Transverse colon (tissue), 4 donors: ENCODE measurements at regions of chr18 and their contacts with region 1.

Region 1: DNA sequence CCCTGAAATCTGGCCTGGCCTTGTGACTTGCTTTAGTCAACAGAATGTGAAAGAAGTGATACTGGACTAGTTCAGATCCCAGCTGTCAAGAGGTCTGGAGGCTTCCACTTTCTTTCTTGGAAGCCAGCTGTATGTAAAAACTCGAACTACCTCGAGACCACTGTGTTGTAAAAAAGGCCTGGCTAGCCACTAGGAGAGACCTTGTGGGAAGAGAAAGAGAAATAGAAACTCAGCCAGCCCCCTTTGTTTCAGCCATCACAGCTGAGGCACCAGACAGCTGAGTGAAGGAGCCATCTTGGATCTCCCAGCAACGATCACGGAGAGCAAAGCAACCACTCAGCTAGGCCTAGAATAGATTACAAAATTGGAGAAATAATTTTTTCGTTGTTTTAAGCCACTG is 324.9 kb upstream of the TCF4 start:
- DNase-seq: no peak
- H3K4me3 ChIP-seq: no peak overlapping the region
- H3K27ac ChIP-seq: no peak overlapping the region
- H3K4me1 ChIP-seq: peaks cover 0 to 4% (median 2%) of the 10 kb centered on the region in 4 donors
- H3K27me3 ChIP-seq: no peaks in the 10 kb centered on the region
- CTCF ChIP-seq: no peak
- EP300 ChIP-seq: no peak
- POLR2A ChIP-seq: no peak

Region 2: DNA sequence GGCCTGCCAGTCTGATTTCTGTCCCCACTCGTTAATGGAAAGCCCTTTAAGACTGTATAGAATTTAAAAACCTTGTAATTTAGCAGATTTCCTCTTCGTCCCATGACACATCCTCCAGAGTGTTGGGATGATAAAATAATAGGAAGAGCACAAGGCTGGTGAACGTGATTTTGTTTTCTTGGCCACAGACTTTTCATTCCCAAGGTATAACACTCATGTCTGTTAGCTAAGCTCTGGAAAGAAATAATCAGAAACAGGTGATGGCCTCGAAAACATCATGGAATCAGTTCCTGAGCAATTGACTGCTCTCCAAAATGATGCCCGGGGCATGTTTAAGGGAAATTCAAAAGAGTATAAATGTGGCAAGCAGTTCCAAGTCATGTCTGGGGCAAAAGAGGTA is 12.9 kb after region 1 on chr18:
- in situ Hi-C with region 1: no loop called
- intact Hi-C with region 1: loop called (anchors 1 kb)
- DNase-seq: no peak
- H3K4me3 ChIP-seq: no peak overlapping the region
- H3K27ac ChIP-seq: no peak overlapping the region
- H3K4me1 ChIP-seq: no peaks in the 10 kb centered on the region
- H3K27me3 ChIP-seq: no peaks in the 10 kb centered on the region
- CTCF ChIP-seq: no peak
- EP300 ChIP-seq: no peak
- POLR2A ChIP-seq: no peak